ENCODE measurements at regions of chr6 and their contacts with region 1.

Region 1: GRCh38 chr6:14348389-14348788 is 230.8 kb downstream of the CD83 start:
- DNase-seq: peak; percentile 52
- H3K4me3 ChIP-seq: no peak overlapping the region
- H3K27ac ChIP-seq: no peak overlapping the region
- H3K4me1 ChIP-seq: peaks cover 26% of the 10 kb centered on the region
- CTCF ChIP-seq: no peak

Region 2: DNA sequence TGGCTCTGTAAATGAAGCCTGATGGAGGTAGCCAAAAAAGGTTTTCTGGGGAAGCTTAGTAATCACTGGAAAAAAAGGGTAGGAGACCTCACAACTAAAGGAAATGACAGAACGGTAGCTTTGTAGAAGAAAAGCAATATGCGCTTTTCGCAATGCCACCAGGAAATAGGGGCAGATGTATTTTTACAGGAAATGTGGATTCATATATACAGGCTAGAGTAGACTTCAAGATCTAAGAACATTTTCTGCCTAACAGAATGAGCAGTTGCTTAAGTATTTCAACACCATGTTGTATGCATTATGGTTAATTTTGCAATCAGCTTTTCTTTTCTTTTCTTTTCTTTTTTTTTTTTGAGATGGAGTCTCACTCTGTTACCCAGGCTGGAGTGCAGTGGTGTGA is 11.2 kb before region 1 on chr6:
- CTCF ChIA-PET with region 1: interaction called, 3 read pairs
- POLR2A ChIA-PET with region 1: interaction called, 30 read pairs
- intact Hi-C with region 1: no loop called
- DNase-seq: no peak
- H3K4me3 ChIP-seq: no peak overlapping the region
- H3K27ac ChIP-seq: no peak overlapping the region
- H3K4me1 ChIP-seq: peaks cover 16% of the 10 kb centered on the region
- CTCF ChIP-seq: no peak

Region 3: GRCh38 chr6:14361297-14361696 is 12.9 kb after region 1 on chr6:
- CTCF ChIA-PET with region 1: no interaction called
- POLR2A ChIA-PET with region 1: interaction called, 12 read pairs
- intact Hi-C with region 1: no loop called
- DNase-seq: no peak
- H3K4me3 ChIP-seq: no peak overlapping the region
- H3K27ac ChIP-seq: no peak overlapping the region
- H3K4me1 ChIP-seq: no peaks in the 10 kb centered on the region
- CTCF ChIP-seq: no peak

Region 4: GRCh38 chr6:14406614-14407331 is 58.4 kb after region 1 on chr6:
- CTCF ChIA-PET with region 1: no interaction called
- POLR2A ChIA-PET with region 1: no interaction called
- intact Hi-C with region 1: no loop called
- DNase-seq: no peak
- H3K4me3 ChIP-seq: no peak overlapping the region
- H3K27ac ChIP-seq: no peak overlapping the region
- H3K4me1 ChIP-seq: no peaks in the 10 kb centered on the region
- CTCF ChIP-seq: no peak

Measured in OCI-LY7 (cell line).